Left cardiac atrium (tissue), 4 donors: ENCODE measurements at regions of chr11 and their contacts with region 1.

Region 1: GRCh38 chr11:114110952-114111947 is 51.7 kb downstream of the ZBTB16 start:
- DNase-seq: peak; percentile 64
- ATAC-seq: peak; percentile 38 to 72

Region 2: GRCh38 chr11:114059278-114059983 is 51.8 kb before region 1 on chr11 and contains the start of gene ZBTB16:
- intact Hi-C with region 1: loop called in 1 of 2 experiments (anchors 10 kb)
- DNase-seq: peak; percentile 91
- ATAC-seq: peak; percentile 78 to 80
- total RNA-seq, gene ZBTB16: 65.2 to 79.5 TPM

Region 3: DNA sequence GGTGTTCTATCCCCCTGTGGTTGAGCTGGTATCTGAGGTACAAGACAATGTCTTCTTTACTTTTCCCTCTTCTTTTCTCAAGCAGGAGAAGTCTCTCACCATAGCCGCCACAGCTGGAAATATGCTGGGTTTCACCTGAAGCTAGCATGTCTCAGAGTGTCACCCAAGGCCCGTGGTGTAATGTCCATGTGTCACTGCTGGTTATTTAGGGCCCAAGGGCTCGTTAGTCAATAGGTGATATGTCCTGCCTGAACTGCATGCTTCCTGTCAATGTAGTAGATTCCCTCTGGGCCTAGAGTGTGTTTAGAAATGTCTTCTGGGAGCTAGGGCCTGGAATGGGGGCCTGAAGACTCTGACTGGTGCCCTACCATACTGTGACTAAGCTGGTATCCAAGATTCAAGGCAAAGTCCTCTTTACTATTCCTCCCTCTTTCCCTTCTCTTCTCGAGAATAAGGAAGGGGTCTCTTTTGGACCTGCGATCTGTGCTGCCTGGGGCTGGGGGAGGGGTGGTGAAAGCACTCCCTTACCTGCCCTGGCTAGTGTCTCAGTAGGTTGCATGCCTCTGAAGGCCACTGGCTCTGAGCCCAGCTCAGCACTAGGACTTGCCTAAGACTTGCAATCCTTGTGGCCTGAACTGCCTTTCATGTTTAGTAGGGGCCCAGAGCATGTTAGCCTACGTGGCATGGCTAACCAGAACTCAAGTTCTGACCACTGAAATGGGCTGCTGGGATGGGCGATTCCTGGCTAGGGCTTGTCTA is 314.9 kb after region 1 on chr11:
- intact Hi-C with region 1: no loop called
- DNase-seq: no peak
- ATAC-seq: no peak